ENCODE measurements at regions of chr19 and their contacts with region 1.

Region 1: DNA sequence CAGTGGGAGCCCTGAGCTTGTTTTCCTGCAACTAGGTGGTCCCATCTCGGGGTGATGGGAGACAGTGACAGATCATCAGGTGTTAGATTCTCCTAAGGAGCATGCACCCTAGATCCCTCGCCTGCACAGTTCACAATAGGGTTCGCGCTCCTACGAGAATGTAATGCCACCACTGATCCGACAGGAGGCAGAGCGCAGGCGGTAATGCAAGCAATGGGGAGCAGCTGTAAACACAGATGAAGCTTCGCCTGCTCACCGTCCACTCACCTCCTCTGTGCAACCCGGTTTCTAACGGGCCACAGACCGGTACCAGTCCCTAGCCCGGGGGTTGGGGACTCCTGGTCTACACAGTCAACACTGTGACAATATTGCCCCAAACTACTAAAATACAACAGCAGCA is 38.8 kb downstream of the CARD8 start:
- DNase-seq: peak; percentile 71
- ATAC-seq: peak; percentile 84
- H3K4me3 Mint-ChIP-seq: no peak overlapping the region
- H3K27ac Mint-ChIP-seq: no peak overlapping the region
- H3K4me1 Mint-ChIP-seq: peaks cover 7% of the 10 kb centered on the region
- H3K27me3 Mint-ChIP-seq: no peaks in the 10 kb centered on the region
- CTCF ChIP-seq: peak; percentile 61

Region 2: DNA sequence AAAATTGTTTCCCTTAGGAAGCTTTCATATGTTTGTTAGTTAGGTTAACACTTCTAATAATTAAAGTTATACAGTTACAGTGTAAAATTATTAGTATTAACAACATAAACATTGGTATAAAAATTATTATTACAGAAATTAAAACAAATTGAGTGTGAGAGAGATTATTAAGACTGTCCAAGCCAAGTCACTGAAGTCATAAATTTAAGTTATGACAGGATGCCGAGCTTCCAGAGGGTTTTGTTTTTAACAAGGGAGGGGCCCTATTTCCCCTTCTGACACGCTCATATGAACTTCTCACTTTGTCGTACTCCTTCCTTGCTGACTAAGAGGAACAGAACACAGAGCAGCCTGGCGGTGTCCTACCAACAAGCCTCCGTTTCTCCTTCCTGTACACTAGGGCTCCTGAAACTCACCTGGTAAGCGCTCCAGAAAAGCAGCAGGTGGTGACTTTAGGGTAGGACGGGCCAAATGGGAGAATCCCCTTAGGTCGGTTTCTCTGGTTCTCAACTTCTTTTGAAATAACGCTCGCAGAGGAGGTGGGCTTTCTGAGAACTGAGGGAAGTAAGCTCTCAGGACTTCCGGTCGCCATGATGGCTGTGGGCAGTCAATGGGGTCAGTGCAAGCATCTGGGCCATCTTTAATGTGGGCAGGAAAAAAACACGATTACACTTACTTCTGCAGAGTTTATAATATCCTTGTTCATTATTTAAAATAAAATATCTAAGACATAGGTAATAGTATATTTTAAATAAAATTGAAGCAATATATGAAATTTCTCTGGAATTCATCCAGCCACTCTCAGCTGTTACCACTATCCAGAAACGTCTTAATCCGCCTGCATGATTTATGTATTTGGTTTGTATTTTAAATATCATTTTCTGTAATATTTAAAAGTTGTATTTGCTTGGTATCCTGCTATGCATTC is 38.7 kb after region 1 on chr19 and contains the start of gene CARD8:
- CTCF ChIA-PET with region 1: interaction called, 19 read pairs
- POLR2A ChIA-PET with region 1: no interaction called
- DNase-seq: peak; percentile 69
- ATAC-seq: peak; percentile 86
- H3K4me3 Mint-ChIP-seq: peak within 1 kb of the TSS; percentile 96
- H3K27ac Mint-ChIP-seq: peak within 1 kb of the TSS; percentile 98
- H3K4me1 Mint-ChIP-seq: peaks cover 11% of the 10 kb centered on the region
- H3K27me3 Mint-ChIP-seq: peaks cover 7% of the 10 kb centered on the region
- CTCF ChIP-seq: no peak
- total RNA-seq, gene CARD8: 23.0 to 31.1 TPM (median 29.8 TPM) in 3 replicates

Measured in WTC11 (cell line).